ENCODE measurements at regions of chr12 and their contacts with region 1.

Region 1: DNA sequence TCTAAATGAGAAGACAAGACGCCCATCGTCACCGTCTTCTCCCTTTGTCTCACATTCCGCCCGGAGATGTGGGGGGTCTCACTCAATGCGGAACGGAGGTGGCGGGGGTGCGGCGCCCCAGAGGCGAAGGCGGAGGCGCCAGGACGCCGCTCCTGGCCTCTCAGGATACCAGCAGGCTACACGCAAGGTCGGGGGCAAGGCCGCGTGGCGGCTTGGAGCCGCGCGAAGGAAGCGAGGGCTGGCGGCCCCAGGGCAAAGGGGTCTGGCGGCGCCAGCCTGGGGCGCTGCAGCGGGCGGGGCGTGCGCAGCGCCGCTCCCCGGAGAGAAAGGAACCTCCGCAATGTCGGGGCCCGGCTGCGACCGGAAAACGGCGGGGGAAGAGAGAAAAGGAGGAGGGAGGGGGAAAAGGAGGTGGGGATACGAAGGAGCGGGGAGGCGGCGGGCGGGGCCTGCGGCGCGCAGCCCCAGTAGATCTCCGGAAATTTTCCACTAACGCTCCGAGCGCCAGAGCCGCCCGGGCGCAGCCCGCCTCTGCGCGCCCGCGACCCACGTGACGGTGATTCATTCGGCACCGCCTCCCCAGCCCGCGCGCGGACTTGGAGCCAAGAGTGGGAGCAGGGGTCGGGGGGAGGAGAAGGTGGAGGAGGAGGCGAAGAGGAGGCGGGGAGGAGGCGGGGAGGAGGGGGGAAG is 10.5 kb upstream of the SLC38A2 start:
- DNase-seq: peak; percentile 85 to 98
- H3K4me3 ChIP-seq: peak overlapping the region; percentile 92
- H3K27ac ChIP-seq: peak overlapping the region; percentile 97
- H3K4me1 ChIP-seq: peaks cover 39% of the 10 kb centered on the region
- H3K27me3 ChIP-seq: no peaks in the 10 kb centered on the region
- CTCF ChIP-seq: no peak; the same call in 1 of the 2 replicates

Region 2: DNA sequence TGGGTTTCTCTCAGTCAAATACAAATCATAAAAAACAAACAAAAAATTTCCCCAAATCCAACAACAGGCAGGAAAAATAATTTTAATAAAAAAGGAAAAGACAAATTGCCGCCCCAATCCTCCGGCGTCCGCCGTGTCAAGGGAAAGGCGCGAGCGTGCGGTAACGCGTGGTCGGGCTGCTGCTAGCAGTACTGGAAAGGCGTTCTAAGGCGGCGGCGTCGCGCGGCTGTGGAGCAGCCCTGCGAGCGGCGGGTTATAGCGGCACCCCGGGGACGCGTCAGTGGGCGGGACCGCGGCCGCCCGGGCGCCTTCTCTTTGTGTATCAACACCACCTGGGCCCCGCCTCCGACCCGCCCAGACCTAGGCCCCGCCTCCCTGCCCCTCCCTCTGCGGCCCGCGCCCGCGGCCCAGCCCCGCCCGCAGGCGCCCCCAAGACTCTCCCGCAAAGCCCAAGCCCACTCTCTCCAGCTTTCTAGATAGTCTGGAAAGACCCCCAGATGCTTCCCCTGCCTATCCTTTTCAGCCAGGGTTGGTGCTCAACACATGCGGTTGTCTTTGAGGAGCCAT is 10.5 kb before region 1 on chr12 and contains the start of gene SLC38A2:
- CTCF ChIA-PET with region 1: no interaction called
- POLR2A ChIA-PET with region 1: interaction called, 7 read pairs
- intact Hi-C with region 1: loop called (anchors 1 kb)
- DNase-seq: peak; percentile 70 to 94
- H3K4me3 ChIP-seq: peak within 1 kb of the TSS; percentile 94
- H3K27ac ChIP-seq: peak within 1 kb of the TSS; percentile 97
- H3K4me1 ChIP-seq: peaks cover 43% of the 10 kb centered on the region
- H3K27me3 ChIP-seq: no peaks in the 10 kb centered on the region
- CTCF ChIP-seq: no peak
- total RNA-seq, gene SLC38A2: 193 and 322 TPM in 2 replicates

Region 3: GRCh38 chr12:46455648-46456352 is 72.7 kb after region 1 on chr12:
- CTCF ChIA-PET with region 1: no interaction called
- POLR2A ChIA-PET with region 1: interaction called, 6 read pairs
- intact Hi-C with region 1: loop called (anchors 1 kb)
- DNase-seq: peak; percentile 78 to 100
- H3K4me3 ChIP-seq: peak overlapping the region; percentile 38; the same call in 1 of the 2 replicates
- H3K27ac ChIP-seq: peak overlapping the region; percentile 99
- H3K4me1 ChIP-seq: peaks cover 65% of the 10 kb centered on the region
- H3K27me3 ChIP-seq: no peaks in the 10 kb centered on the region
- CTCF ChIP-seq: no peak

Region 4: DNA sequence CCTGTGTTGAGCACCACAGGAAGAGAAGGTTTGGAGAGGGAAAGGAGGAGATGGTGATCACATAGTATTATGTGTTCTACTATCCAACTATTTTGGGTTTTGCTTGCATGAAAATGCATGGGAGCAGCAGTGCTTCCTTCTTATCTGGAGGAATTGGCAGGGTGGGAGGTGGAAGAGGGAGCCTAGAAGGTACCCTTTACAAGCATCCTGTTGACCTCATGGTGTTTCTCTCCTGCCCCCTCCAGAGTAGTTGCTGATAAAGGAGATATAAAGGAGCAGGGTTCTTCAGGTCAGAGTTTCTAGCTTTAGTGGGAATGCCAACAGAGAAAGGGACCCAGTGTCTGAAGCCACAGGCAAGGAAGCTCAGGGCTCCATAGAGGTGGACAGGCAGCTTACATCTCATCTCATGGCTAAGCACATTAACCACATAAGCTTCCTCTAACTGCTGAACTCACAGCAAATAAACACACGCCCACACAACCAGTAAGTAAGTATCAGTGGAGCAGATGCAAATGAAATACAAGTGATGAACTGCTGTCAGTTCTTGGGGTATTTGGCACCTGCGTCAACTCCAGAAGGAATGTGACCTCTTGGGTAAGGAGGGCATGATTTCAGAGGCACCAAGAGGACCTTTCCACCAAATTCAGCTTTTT is 163.7 kb after region 1 on chr12:
- CTCF ChIA-PET with region 1: no interaction called
- POLR2A ChIA-PET with region 1: no interaction called
- intact Hi-C with region 1: loop called (anchors 1 kb)
- DNase-seq: peak in 1 of 2 experiments; percentile 62
- H3K4me3 ChIP-seq: no peak overlapping the region
- H3K27ac ChIP-seq: peak overlapping the region; percentile 88
- H3K4me1 ChIP-seq: peaks cover 33% of the 10 kb centered on the region
- H3K27me3 ChIP-seq: no peaks in the 10 kb centered on the region
- CTCF ChIP-seq: no peak

Region 5: GRCh38 chr12:47753034-47754001 is 1370.2 kb after region 1 on chr12:
- CTCF ChIA-PET with region 1: no interaction called
- POLR2A ChIA-PET with region 1: no interaction called
- intact Hi-C with region 1: loop called (anchors 5 kb)
- DNase-seq: peak; percentile 89 to 92
- H3K4me3 ChIP-seq: peak overlapping the region; percentile 29; the same call in 1 of the 2 replicates
- H3K27ac ChIP-seq: peak overlapping the region; percentile 75
- H3K4me1 ChIP-seq: peaks cover 81% of the 10 kb centered on the region
- H3K27me3 ChIP-seq: no peaks in the 10 kb centered on the region
- CTCF ChIP-seq: no peak; the same call in 1 of the 2 replicates

Measured in PC-9 (cell line).